Transverse colon (tissue), 4 donors: ENCODE measurements at regions of chr6 and their contacts with region 1.

Region 1: GRCh38 chr6:13159300-13159699 is 169.0 kb downstream of the TBC1D7 start:
- DNase-seq: no peak
- H3K4me3 ChIP-seq: no peak overlapping the region
- H3K27ac ChIP-seq: no peak overlapping the region
- H3K4me1 ChIP-seq: no peaks in the 10 kb centered on the region
- H3K27me3 ChIP-seq: no peaks in the 10 kb centered on the region
- CTCF ChIP-seq: no peak
- EP300 ChIP-seq: no peak
- POLR2A ChIP-seq: no peak

Region 2: GRCh38 chr6:14533446-14533845 is 1374.1 kb after region 1 on chr6:
- in situ Hi-C with region 1: no loop called
- intact Hi-C with region 1: loop called (anchors 10 kb)
- DNase-seq: no peak
- H3K4me3 ChIP-seq: no peak overlapping the region
- H3K27ac ChIP-seq: no peak overlapping the region
- H3K4me1 ChIP-seq: peaks cover 0 to 3% (median 0%) of the 10 kb centered on the region in 4 donors
- H3K27me3 ChIP-seq: no peaks in the 10 kb centered on the region
- CTCF ChIP-seq: no peak
- EP300 ChIP-seq: no peak
- POLR2A ChIP-seq: no peak